ENCODE measurements at regions of chrX and their contacts with region 1.

Region 1: GRCh38 chrX:41558531-41558930 is 111.4 kb downstream of the NYX start:
- DNase-seq: no peak
- H3K4me3 ChIP-seq: no peak overlapping the region
- H3K27ac ChIP-seq: no peak overlapping the region
- H3K27me3 ChIP-seq: peaks cover 0 to 67% (median 8%) of the 10 kb centered on the region in 45 donors
- CTCF ChIP-seq: peak in 55 of 56 donors; percentile 18 to 72 (median 50)

Region 2: GRCh38 chrX:41718481-41719243 is 160.1 kb after region 1 on chrX:
- intact Hi-C with region 1: loop called in 1 of 2 experiments (anchors 10 kb)
- DNase-seq: no peak
- H3K4me3 ChIP-seq: no peak overlapping the region
- H3K27ac ChIP-seq: peak overlapping the region in 17 of 59 donors; percentile 7 to 62 (median 37)
- H3K27me3 ChIP-seq: peaks cover 0 to 53% (median 4%) of the 10 kb centered on the region in 45 donors
- CTCF ChIP-seq: peak in 2 of 56 donors; percentile 17 to 25

Region 3: DNA sequence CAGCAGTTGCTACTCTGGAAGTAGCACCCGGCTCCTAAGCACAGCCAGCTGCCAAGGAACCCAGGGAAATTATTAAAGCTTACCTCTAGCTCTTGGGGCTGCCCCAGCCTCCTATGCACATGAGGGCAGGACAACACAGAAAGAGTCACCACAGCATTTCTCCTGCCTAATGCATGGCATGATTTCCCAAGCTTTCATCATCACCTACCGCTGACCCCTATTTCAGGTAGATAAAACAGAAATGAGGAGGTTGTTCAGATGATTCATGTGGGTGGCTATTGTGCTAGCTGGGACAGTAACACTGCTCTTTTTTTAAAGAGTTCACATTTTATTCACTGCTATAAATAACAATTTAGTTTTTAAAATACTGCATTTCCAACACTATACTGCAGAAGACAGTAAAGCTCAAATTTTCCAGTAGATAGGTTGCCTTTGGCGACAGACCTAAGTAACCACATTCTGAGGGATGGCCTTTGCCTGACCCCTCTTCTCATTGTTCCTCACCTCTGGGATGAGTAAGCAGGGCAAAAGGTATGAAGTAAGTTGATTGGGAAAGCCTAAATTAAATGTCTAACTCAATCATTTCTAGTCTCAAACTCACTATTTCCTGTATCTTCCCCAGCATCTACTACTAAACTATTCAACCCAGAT is 348.1 kb after region 1 on chrX:
- intact Hi-C with region 1: no loop called
- DNase-seq: no peak
- H3K4me3 ChIP-seq: no peak overlapping the region
- H3K27ac ChIP-seq: no peak overlapping the region
- H3K27me3 ChIP-seq: peaks cover 0 to 47% (median 4%) of the 10 kb centered on the region in 45 donors
- CTCF ChIP-seq: no peak